ENCODE measurements at regions of chr2 and their contacts with region 1.

Region 1: DNA sequence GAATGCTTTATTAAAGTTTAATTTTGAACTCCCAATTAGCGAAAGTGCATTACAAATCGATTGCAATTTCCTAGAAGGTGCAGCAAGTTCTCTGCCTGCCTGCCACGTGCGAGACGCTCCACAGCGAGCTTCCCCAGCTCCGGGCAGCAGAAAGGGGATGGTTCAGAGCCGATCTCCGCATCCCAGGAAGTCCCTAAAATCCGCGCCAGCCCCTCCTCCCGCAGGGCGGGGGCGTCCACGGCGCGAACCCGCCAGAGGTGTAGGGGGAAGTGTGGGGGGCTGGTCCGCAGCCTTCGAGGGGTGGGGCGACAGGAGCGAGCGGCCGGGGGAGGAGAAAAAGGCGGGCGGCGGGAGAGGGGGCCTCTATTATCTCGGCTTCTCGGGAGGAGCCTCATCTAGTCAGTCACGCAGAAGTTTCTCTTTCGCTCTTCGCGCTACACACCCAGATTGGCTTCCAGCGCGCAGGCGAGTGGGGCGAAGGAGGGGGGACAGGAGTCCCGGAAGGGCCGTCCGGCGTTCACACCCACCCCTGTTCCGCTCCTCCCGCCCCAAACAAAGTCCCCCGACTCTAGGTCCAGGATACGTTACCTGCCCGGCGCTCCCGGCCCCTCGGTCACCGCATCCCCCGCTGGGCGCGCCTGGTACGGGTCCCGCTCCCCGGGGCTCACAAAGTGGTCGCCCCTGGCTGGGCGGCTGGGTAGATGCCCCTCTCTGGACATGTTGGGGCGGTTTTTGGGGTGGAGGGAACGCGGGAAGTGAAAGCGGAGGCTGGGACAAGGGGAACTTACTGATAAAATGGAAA is 9.1 kb upstream of the NR4A2 start:
- DNase-seq: peak; percentile 91
- CTCF ChIP-seq: no peak

Region 2: GRCh38 chr2:156589381-156590079 is 247.9 kb after region 1 on chr2:
- CTCF ChIA-PET with region 1: interaction called, 51 read pairs
- POLR2A ChIA-PET with region 1: no interaction called
- DNase-seq: peak; percentile 15
- CTCF ChIP-seq: peak; percentile 45

Measured in GM10248 (cell line).